ENCODE measurements at regions of chr10 and their contacts with region 1.

Region 1: DNA sequence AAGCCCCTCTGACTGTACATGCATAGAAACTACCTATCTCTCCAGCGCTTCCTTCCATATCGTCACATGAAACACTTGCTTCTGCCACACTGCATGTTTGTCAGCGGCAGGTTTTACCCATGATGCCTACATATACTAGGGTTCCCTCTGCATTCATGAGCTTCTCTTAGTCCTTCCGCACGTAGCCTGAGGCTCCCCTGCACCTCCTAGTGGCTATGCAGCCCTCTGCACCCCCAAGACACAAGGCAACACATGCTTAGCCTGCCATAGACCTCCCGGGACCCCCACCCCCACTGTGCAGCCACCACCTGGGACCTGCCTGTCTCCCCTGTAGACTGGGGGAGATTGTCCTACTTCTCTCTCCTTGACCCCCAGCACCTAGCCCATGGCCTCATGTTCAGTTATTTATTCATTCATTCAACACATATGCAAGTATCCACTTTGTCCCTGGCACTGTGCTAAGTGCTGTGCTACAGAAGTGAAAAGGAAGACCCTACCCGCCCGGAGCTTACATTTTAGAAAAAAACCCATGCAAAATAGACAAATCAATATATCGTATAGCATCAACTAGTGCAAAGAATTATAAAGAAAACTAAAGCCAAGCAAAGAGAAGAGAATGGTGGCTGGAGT is 23.5 kb downstream of the TMEM273 start:
- DNase-seq: no peak

Region 2: GRCh38 chr10:48885383-48885782 is 279.3 kb before region 1 on chr10:
- intact Hi-C with region 1: loop called (anchors 10 kb)
- DNase-seq: no peak

Region 3: GRCh38 chr10:49023752-49024151 is 140.9 kb before region 1 on chr10:
- intact Hi-C with region 1: no loop called
- DNase-seq: no peak

Measured in cardiac septum (tissue), 1 donor.